ENCODE measurements at regions of chr1 and their contacts with region 1.

Region 1: GRCh38 chr1:235504496-235505222 is 407 bp upstream of the B3GALNT2 start:
- DNase-seq: peak; percentile 97 to 99 (median 98)
- ATAC-seq: peak; percentile 87
- H3K4me3 ChIP-seq: peak overlapping the region; percentile 81 to 85
- H3K4me3 Mint-ChIP-seq: peak overlapping the region; percentile 91
- H3K27ac ChIP-seq: peak overlapping the region; percentile 87 to 89
- H3K27ac Mint-ChIP-seq: peak overlapping the region; percentile 98
- H3K4me1 ChIP-seq: peaks cover 7% of the 10 kb centered on the region
- H3K4me1 Mint-ChIP-seq: peaks cover 26% of the 10 kb centered on the region
- H3K27me3 ChIP-seq: no peaks in the 10 kb centered on the region
- H3K27me3 Mint-ChIP-seq: no peaks in the 10 kb centered on the region
- CTCF ChIP-seq: peak; percentile 91

Region 2: GRCh38 chr1:234478481-234479309 is 1026.0 kb before region 1 on chr1 and contains the start of gene TARBP1:
- CTCF ChIA-PET with region 1: no interaction called
- POLR2A ChIA-PET with region 1: interaction called, 4 read pairs
- intact Hi-C with region 1: loop called in 1 of 2 experiments (anchors 5 kb)
- DNase-seq: peak; percentile 53 to 91 (median 72)
- ATAC-seq: peak; percentile 69
- H3K4me3 ChIP-seq: peak within 1 kb of the TSS; percentile 64 to 85
- H3K4me3 Mint-ChIP-seq: peak within 1 kb of the TSS; percentile 90
- H3K27ac ChIP-seq: peak within 1 kb of the TSS; percentile 71 to 75
- H3K27ac Mint-ChIP-seq: peak within 1 kb of the TSS; percentile 96
- H3K4me1 ChIP-seq: peaks cover 33% of the 10 kb centered on the region
- H3K4me1 Mint-ChIP-seq: peaks cover 42% of the 10 kb centered on the region
- H3K27me3 ChIP-seq: no peaks in the 10 kb centered on the region
- H3K27me3 Mint-ChIP-seq: peaks cover 2% of the 10 kb centered on the region
- CTCF ChIP-seq: no peak
- total RNA-seq, gene TARBP1: 38.2 to 39.5 TPM

Region 3: DNA sequence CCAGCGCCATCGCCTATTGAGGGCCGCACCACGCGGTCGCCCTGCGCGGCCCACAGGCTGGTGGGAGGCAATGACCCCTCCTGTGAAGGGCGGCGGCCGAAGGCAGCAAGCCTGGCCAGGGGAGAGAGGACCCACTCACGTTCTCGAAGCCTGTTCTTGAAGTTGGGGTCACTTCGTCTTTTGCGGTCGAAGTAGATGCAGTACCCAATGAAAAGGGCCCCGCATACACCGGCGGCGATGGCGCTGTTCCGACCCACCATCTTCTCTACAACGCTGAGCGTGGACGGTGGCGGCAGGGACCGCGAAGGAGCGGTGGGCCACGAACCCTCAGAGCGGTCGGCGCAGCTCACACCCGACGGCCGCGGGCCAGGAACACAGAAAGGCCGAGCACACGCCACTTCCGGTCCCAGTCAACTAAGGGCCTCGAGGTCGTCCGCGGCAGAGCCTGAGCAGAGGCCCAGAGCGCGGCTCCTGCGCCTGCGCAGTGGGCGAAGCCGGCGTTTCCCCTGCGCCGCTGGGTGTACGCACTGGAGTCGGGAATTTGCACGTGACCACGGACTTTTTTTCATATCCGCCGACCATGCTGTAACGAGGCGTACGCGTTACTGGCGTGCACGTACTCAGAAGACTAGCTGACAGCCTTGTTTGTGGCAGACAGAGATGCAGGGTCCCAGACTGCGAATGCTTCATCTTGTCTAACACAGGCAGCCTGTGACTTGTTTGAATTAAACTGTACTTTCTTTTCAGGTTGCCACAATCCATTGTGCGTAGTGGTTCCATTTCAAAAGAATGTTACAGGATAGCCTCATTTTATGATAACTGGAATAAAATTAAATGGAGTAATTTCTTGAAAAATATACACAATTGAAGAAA is 376.0 kb before region 1 on chr1 and contains the start of gene TOMM20:
- CTCF ChIA-PET with region 1: no interaction called
- POLR2A ChIA-PET with region 1: interaction called, 5 read pairs
- intact Hi-C with region 1: loop called in 1 of 2 experiments (anchors 2 kb)
- DNase-seq: peak; percentile 88 to 98 (median 91)
- ATAC-seq: peak; percentile 88
- H3K4me3 ChIP-seq: peak within 1 kb of the TSS; percentile 83 to 98
- H3K4me3 Mint-ChIP-seq: peak within 1 kb of the TSS; percentile 88
- H3K27ac ChIP-seq: peak within 1 kb of the TSS; percentile 92 to 95
- H3K27ac Mint-ChIP-seq: peak within 1 kb of the TSS; percentile 93
- H3K4me1 ChIP-seq: peaks cover 36% of the 10 kb centered on the region
- H3K4me1 Mint-ChIP-seq: peaks cover 44% of the 10 kb centered on the region
- H3K27me3 ChIP-seq: no peaks in the 10 kb centered on the region
- H3K27me3 Mint-ChIP-seq: no peaks in the 10 kb centered on the region
- CTCF ChIP-seq: no peak
- total RNA-seq, gene TOMM20: 165 to 166 TPM

Region 4: GRCh38 chr1:235450886-235451483 is 53.7 kb before region 1 on chr1:
- CTCF ChIA-PET with region 1: no interaction called
- POLR2A ChIA-PET with region 1: no interaction called
- intact Hi-C with region 1: loop called in 1 of 2 experiments (anchors 5 kb)
- DNase-seq: no peak
- ATAC-seq: no peak
- H3K4me3 ChIP-seq: no peak overlapping the region
- H3K4me3 Mint-ChIP-seq: no peak overlapping the region
- H3K27ac ChIP-seq: no peak overlapping the region
- H3K27ac Mint-ChIP-seq: no peak overlapping the region
- H3K4me1 ChIP-seq: no peaks in the 10 kb centered on the region
- H3K4me1 Mint-ChIP-seq: no peaks in the 10 kb centered on the region
- H3K27me3 ChIP-seq: no peaks in the 10 kb centered on the region
- H3K27me3 Mint-ChIP-seq: no peaks in the 10 kb centered on the region
- CTCF ChIP-seq: no peak

Region 5: DNA sequence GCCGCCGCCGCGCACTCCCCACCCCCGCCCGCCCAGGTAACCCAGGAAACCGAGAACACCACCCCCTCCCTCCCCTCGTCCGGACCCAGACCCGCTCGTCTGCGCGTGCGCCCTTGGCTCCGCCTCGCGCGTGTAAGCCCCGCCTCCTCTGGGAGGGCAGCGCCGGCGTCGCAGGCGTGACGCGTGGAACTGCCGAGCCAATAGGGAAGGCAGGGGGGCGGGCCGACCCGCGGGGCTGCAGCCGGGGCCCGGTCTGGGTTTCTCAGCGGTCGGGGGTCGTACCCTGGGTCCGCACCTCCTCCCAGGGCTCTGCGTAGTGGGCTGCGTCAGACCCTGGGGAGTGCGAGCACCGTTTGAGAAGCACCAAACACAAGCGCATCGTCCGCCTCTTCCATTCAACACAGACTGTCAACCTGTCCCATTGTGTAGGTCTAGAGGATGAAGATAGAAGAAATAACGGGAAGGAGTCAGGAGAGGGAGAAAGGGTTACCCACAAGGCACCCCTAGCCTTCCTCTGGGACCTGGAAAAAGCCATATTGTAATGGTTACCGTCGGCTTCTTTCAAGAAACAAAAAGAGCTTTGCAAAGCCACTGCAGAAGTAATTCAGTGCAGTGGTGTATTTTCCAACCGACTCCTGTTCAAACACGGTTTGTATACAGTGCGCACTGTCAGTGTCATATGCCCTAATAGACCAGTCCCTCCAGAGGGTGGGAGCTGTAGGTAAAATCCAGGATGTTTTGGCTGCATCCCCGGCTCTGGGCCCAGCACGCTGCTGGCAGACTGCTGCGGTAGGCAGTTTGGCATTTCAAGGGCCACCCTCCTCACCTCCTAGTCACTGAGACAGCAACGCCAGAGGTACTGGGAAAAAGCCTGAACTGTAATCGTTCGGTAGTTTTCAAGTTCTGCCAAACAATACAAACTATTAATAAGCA is 362.5 kb after region 1 on chr1:
- CTCF ChIA-PET with region 1: interaction called, 3 read pairs
- POLR2A ChIA-PET with region 1: no interaction called
- intact Hi-C with region 1: loop called (anchors 2 kb)
- DNase-seq: peak; percentile 96 to 99 (median 98)
- ATAC-seq: peak; percentile 75
- H3K4me3 ChIP-seq: peak overlapping the region; percentile 74 to 89
- H3K4me3 Mint-ChIP-seq: peak overlapping the region; percentile 95
- H3K27ac ChIP-seq: peak overlapping the region; percentile 95 to 99
- H3K27ac Mint-ChIP-seq: peak overlapping the region; percentile 99
- H3K4me1 ChIP-seq: peaks cover 27% of the 10 kb centered on the region
- H3K4me1 Mint-ChIP-seq: peaks cover 52% of the 10 kb centered on the region
- H3K27me3 ChIP-seq: no peaks in the 10 kb centered on the region
- H3K27me3 Mint-ChIP-seq: no peaks in the 10 kb centered on the region
- CTCF ChIP-seq: no peak

Region 6: DNA sequence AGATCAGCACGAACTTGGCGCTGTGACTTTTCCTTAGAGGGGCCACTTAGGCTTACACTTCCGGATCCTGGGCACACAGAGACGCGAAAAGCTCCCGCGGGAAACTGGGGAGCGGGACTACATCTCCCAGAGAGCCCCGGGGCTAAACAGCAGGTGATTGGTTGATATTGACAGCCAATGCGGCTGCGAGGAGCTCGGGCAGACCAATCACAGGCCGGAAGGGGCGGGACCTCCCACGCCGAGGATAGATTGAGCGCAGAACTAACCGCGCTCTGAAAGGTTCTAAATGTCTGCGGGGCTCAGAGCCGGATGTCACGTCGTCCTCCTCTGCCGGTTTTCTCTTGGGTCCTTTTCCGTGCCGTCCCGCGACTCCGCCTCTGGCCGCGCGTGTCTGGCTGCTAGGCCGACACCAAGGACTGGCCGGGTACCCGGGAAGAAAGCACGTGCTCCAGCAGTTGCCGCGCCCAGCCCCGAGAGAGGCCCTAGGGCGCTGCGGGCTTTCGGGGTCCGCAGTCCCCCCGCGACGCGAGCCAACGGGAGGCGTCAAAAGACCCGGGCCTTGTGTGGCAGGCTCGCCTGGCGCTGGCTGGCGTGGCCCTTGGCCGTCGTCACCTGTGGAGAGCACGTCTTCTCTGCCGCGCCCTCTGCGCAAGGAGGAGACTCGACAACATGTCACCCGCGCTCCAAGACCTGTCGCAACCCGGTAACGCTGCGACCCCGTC is 1290.5 kb after region 1 on chr1 and contains the start of gene MTR:
- CTCF ChIA-PET with region 1: no interaction called
- POLR2A ChIA-PET with region 1: interaction called, 3 read pairs
- intact Hi-C with region 1: loop called (anchors 10 kb)
- DNase-seq: peak; percentile 90 to 98 (median 95)
- ATAC-seq: peak; percentile 88
- H3K4me3 ChIP-seq: peak within 1 kb of the TSS; percentile 59 to 88
- H3K4me3 Mint-ChIP-seq: peak within 1 kb of the TSS; percentile 90
- H3K27ac ChIP-seq: peak within 1 kb of the TSS; percentile 95 to 97
- H3K27ac Mint-ChIP-seq: peak within 1 kb of the TSS; percentile 98
- H3K4me1 ChIP-seq: peaks cover 25% of the 10 kb centered on the region
- H3K4me1 Mint-ChIP-seq: peaks cover 46% of the 10 kb centered on the region
- H3K27me3 ChIP-seq: no peaks in the 10 kb centered on the region
- H3K27me3 Mint-ChIP-seq: peaks cover 2% of the 10 kb centered on the region
- CTCF ChIP-seq: no peak
- total RNA-seq, gene MTR: 32.9 to 35.0 TPM

Measured in CD8-positive, alpha-beta T cell (primary cell).